Panc1 (cell line): ENCODE measurements at regions of chr3 and their contacts with region 1.

Region 1: GRCh38 chr3:194134757-194135528 is 1.0 kb upstream of the HES1 start:
- DNase-seq: no peak
- ATAC-seq: peak; percentile 74
- H3K4me3 ChIP-seq: peak overlapping the region; percentile 90 to 96
- H3K27ac ChIP-seq: peak overlapping the region; percentile 96
- H3K4me1 ChIP-seq: peaks cover 58% of the 10 kb centered on the region
- H3K27me3 ChIP-seq: no peaks in the 10 kb centered on the region
- CTCF ChIP-seq: no peak

Region 2: GRCh38 chr3:193665370-193665989 is 469.5 kb before region 1 on chr3:
- CTCF ChIA-PET with region 1: no interaction called
- POLR2A ChIA-PET with region 1: no interaction called
- in situ Hi-C with region 1: no loop called
- intact Hi-C with region 1: loop called (anchors 5 kb)
- DNase-seq: peak; percentile 15
- ATAC-seq: no peak
- H3K4me3 ChIP-seq: no peak overlapping the region
- H3K27ac ChIP-seq: no peak overlapping the region
- H3K4me1 ChIP-seq: no peaks in the 10 kb centered on the region
- H3K27me3 ChIP-seq: no peaks in the 10 kb centered on the region
- CTCF ChIP-seq: peak; percentile 66; the same call in 1 of the 2 replicates

Region 3: GRCh38 chr3:193780810-193781472 is 354.0 kb before region 1 on chr3:
- CTCF ChIA-PET with region 1: interaction called, 11 read pairs
- POLR2A ChIA-PET with region 1: interaction called, 3 read pairs
- in situ Hi-C with region 1: no loop called
- intact Hi-C with region 1: loop called (anchors 1 kb)
- DNase-seq: no peak
- ATAC-seq: peak; percentile 91
- H3K4me3 ChIP-seq: no peak overlapping the region
- H3K27ac ChIP-seq: 0 out of 2 replicates have a peak overlapping the region, but pooled peaks have one; percentile 12
- H3K4me1 ChIP-seq: peaks cover 24% of the 10 kb centered on the region
- H3K27me3 ChIP-seq: no peaks in the 10 kb centered on the region
- CTCF ChIP-seq: peak; percentile 96

Region 4: DNA sequence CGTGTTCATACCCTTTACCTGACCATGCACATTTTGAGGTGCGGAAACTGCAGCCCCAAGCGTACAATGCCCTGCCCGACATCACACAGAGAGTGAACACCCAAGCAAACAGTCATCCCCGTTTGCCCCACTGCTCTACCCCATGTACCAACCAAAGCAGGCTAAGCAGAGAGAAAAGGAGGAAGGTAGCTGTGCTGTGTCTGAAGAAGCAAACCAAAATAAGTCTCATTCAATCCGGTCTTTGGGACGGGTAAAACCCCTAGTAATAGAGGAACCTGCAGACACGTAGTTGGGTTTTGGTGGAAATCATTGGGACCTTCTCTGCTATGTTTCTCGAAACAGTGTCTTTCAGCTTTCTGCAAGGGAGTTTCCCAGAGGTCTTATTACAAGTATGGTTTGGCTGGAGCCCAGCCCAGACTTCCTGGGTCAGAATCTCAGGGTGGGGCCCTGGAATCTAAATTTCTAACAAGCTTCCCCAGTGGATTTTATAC is 163.6 kb before region 1 on chr3:
- CTCF ChIA-PET with region 1: no interaction called
- POLR2A ChIA-PET with region 1: no interaction called
- in situ Hi-C with region 1: no loop called
- intact Hi-C with region 1: loop called (anchors 10 kb)
- DNase-seq: no peak
- ATAC-seq: no peak
- H3K4me3 ChIP-seq: no peak overlapping the region
- H3K27ac ChIP-seq: peak overlapping the region; percentile 26; the same call in 1 of the 2 replicates
- H3K4me1 ChIP-seq: peaks cover 5% of the 10 kb centered on the region; the same call in 1 of the 2 replicates
- H3K27me3 ChIP-seq: no peaks in the 10 kb centered on the region
- CTCF ChIP-seq: no peak

Region 5: GRCh38 chr3:194075802-194076460 is 59.0 kb before region 1 on chr3:
- CTCF ChIA-PET with region 1: no interaction called
- POLR2A ChIA-PET with region 1: interaction called, 3 read pairs
- in situ Hi-C with region 1: no loop called
- intact Hi-C with region 1: loop called (anchors 5 kb)
- DNase-seq: no peak
- ATAC-seq: peak; percentile 85
- H3K4me3 ChIP-seq: no peak overlapping the region
- H3K27ac ChIP-seq: peak overlapping the region; percentile 81
- H3K4me1 ChIP-seq: peaks cover 44% of the 10 kb centered on the region
- H3K27me3 ChIP-seq: no peaks in the 10 kb centered on the region
- CTCF ChIP-seq: no peak; the same call in 1 of the 2 replicates